MCF 10A (cell line): ENCODE measurements at regions of chr20 and their contacts with region 1.

Region 1: GRCh38 chr20:50588034-50588611 is 77.9 kb downstream of the PTPN1 start:
- DNase-seq: peak; percentile 81
- H3K4me3 Mint-ChIP-seq: peak overlapping the region; percentile 17
- H3K27ac Mint-ChIP-seq: peak overlapping the region; percentile 83
- H3K4me1 Mint-ChIP-seq: peaks cover 16% of the 10 kb centered on the region
- H3K27me3 Mint-ChIP-seq: no peaks in the 10 kb centered on the region
- CTCF ChIP-seq: peak; percentile 96

Region 2: GRCh38 chr20:49603209-49603627 is 984.9 kb before region 1 on chr20:
- CTCF ChIA-PET with region 1: no interaction called
- POLR2A ChIA-PET with region 1: no interaction called
- intact Hi-C with region 1: no loop called
- DNase-seq: no peak
- H3K4me3 Mint-ChIP-seq: no peak overlapping the region
- H3K27ac Mint-ChIP-seq: no peak overlapping the region
- H3K4me1 Mint-ChIP-seq: peaks cover 13% of the 10 kb centered on the region
- H3K27me3 Mint-ChIP-seq: no peaks in the 10 kb centered on the region
- CTCF ChIP-seq: no peak

Region 3: GRCh38 chr20:50303573-50304501 is 284.3 kb before region 1 on chr20:
- CTCF ChIA-PET with region 1: no interaction called
- POLR2A ChIA-PET with region 1: no interaction called
- intact Hi-C with region 1: no loop called
- DNase-seq: peak; percentile 61
- H3K4me3 Mint-ChIP-seq: no peak overlapping the region
- H3K27ac Mint-ChIP-seq: peak overlapping the region; percentile 26
- H3K4me1 Mint-ChIP-seq: peaks cover 40% of the 10 kb centered on the region
- H3K27me3 Mint-ChIP-seq: no peaks in the 10 kb centered on the region
- CTCF ChIP-seq: no peak

Region 4: DNA sequence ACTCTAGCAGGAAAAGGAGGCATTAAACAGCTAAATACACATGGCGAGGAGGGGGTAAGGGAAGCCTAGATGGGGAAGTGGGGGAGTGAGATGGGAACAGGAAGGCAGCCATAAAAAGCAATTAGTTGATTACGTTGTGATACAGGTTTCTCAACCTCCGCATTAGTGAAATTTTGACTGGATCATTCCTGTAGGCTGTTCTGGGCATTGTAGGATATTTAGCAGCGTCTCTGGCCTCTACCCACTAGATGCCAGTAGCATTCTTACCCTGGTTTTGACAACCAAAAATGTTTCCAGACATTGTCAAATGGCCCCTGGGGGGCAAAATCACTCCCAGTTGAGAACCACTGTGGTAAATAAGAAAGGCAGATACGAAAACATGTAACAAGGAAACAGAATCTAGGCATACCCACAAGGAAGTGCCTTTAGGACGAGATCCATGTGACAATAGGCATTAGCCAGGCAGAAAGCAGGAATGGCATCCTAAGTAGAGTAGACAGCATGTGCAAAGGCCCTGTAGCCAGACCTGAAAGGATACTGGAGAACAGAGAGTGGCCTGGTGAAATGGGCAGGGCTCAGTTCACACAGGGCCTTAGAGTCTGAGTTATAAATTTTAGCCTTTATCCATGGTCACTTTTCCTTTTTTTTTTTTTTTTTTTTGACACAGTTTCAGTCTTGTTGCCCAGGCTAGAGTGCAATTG is 103.7 kb before region 1 on chr20:
- CTCF ChIA-PET with region 1: interaction called, 10 read pairs
- POLR2A ChIA-PET with region 1: interaction called, 15 read pairs
- intact Hi-C with region 1: no loop called
- DNase-seq: peak; percentile 30
- H3K4me3 Mint-ChIP-seq: peak overlapping the region; percentile 75
- H3K27ac Mint-ChIP-seq: peak overlapping the region; percentile 90
- H3K4me1 Mint-ChIP-seq: peaks cover 12% of the 10 kb centered on the region
- H3K27me3 Mint-ChIP-seq: no peaks in the 10 kb centered on the region
- CTCF ChIP-seq: peak; percentile 29

Region 5: DNA sequence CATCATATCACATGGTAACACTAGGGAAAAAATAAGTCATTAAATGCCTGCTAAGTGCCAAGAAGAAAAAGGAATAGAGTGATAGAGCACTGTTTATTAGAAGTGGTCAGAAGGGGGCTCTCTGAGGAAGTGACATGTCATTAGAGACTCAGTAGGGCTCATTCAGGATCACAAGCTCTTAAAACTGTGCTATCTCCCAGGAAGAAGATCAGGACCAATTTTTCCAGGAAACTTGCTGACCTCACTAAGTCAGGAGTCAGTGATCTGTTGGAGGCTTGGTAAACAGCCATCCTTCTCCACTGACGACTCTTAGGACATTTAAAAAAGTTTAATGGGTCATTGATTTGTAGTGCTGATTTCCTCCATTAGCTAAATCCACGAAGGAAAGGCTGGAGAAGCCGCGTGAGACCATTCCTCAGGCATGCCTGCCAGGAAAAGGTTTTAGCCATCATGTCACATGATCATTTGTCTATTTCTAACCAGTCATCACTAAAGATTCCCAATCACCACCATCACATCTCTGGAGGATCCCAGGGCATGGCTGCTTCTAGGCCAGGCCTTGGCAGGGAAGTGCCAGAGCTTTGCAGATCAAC is 83.8 kb before region 1 on chr20:
- CTCF ChIA-PET with region 1: interaction called, 3 read pairs
- POLR2A ChIA-PET with region 1: interaction called, 52 read pairs
- intact Hi-C with region 1: no loop called
- DNase-seq: no peak
- H3K4me3 Mint-ChIP-seq: no peak overlapping the region
- H3K27ac Mint-ChIP-seq: peak overlapping the region; percentile 88
- H3K4me1 Mint-ChIP-seq: peaks cover 27% of the 10 kb centered on the region
- H3K27me3 Mint-ChIP-seq: no peaks in the 10 kb centered on the region
- CTCF ChIP-seq: no peak

Region 6: DNA sequence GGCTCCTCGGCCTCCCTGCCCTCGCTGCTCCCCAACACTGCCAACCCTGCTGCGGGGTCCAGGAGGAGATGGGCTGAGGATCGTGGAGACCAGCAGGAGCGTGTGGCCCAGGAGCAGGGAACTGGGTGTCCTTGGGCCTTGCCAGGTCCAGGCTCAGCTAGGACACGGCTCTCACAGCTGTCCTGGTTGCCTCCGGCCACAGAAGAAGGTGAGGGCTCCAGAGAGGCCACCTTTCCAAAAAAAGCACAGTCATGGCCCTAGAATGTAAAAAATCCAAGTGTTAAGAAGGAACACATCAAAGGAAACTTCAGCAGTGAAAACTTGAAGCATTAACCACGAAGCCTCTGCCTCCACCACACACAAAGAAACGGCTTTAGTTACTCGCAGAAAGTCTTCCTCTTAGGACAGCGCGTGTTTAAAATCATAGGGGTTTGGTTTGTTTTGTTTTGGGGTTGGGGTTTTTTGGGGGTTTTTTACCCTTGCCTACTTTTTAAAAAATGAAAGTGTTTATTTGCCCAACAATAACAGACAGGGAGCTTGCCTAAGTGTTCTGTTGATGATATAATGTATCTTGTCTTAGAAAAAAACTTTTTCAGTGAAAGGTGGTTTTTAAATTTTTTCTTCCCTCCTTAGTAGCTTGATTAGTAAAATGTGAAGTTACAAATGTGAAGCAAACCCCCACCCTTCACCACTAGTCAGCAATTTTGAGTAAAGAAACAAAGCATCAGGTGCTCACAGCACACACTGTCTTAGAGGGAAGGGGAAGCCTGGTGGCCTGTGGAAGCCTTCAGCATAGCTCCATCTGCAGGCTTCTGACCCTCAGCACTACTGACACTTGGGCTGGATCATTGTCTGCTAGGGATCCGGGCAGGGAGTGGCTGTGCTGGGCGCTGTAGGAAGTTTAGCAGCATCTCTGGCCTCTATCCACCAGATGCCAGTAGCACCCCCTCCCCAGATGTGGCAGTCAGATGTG is 18.0 kb before region 1 on chr20:
- CTCF ChIA-PET with region 1: interaction called, 27 read pairs
- POLR2A ChIA-PET with region 1: interaction called, 23 read pairs
- intact Hi-C with region 1: no loop called
- DNase-seq: peak; percentile 42
- H3K4me3 Mint-ChIP-seq: no peak overlapping the region
- H3K27ac Mint-ChIP-seq: peak overlapping the region; percentile 74
- H3K4me1 Mint-ChIP-seq: peaks cover 39% of the 10 kb centered on the region
- H3K27me3 Mint-ChIP-seq: no peaks in the 10 kb centered on the region
- CTCF ChIP-seq: peak; percentile 43

Region 7: DNA sequence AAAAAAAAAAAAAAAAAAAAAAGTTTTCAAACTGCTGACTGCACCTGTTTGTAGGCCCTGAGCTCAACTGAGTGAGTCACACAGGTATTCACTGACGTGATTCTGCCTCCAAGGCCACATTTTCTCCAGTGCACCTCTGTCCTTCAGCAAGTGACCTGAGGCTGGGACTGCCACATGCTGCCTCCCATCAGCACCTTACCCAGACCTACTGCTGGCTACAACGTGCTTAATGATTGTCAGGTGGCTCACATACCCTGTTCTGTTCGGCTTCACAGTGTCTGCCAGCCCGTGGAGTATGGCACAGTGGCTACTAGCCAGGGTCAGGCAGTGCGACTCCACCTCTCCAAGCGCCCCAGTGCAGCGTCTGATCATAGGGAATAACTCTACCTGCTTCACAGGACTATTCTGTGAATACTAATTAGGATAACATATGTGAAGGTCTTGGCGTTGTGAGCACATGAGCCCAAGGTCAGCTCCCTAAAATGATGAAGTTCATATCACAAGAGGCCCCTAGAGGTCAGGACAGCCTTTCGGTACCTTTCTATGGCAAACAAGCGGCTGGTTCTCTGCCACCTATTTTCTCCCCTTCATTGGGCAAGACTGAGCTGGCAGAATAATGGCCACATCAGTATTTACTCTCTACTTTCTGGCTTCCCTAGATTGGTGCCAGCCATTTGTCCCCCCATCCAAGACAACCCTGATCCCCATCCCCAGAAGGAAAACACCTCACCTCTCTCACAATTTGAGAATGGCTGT is 75.2 kb after region 1 on chr20:
- CTCF ChIA-PET with region 1: interaction called, 7 read pairs
- POLR2A ChIA-PET with region 1: interaction called, 10 read pairs
- intact Hi-C with region 1: no loop called
- DNase-seq: peak; percentile 84
- H3K4me3 Mint-ChIP-seq: no peak overlapping the region
- H3K27ac Mint-ChIP-seq: peak overlapping the region; percentile 53
- H3K4me1 Mint-ChIP-seq: peaks cover 21% of the 10 kb centered on the region
- H3K27me3 Mint-ChIP-seq: no peaks in the 10 kb centered on the region
- CTCF ChIP-seq: peak; percentile 60

Region 8: GRCh38 chr20:50744143-50744792 is 156.1 kb after region 1 on chr20:
- CTCF ChIA-PET with region 1: interaction called, 20 read pairs
- POLR2A ChIA-PET with region 1: interaction called, 14 read pairs
- intact Hi-C with region 1: loop called (anchors 2 kb)
- DNase-seq: peak; percentile 88
- H3K4me3 Mint-ChIP-seq: peak overlapping the region; percentile 35
- H3K27ac Mint-ChIP-seq: peak overlapping the region; percentile 51
- H3K4me1 Mint-ChIP-seq: peaks cover 26% of the 10 kb centered on the region
- H3K27me3 Mint-ChIP-seq: no peaks in the 10 kb centered on the region
- CTCF ChIP-seq: peak; percentile 34